ENCODE measurements at regions of chr14 and their contacts with region 1.

Region 1: DNA sequence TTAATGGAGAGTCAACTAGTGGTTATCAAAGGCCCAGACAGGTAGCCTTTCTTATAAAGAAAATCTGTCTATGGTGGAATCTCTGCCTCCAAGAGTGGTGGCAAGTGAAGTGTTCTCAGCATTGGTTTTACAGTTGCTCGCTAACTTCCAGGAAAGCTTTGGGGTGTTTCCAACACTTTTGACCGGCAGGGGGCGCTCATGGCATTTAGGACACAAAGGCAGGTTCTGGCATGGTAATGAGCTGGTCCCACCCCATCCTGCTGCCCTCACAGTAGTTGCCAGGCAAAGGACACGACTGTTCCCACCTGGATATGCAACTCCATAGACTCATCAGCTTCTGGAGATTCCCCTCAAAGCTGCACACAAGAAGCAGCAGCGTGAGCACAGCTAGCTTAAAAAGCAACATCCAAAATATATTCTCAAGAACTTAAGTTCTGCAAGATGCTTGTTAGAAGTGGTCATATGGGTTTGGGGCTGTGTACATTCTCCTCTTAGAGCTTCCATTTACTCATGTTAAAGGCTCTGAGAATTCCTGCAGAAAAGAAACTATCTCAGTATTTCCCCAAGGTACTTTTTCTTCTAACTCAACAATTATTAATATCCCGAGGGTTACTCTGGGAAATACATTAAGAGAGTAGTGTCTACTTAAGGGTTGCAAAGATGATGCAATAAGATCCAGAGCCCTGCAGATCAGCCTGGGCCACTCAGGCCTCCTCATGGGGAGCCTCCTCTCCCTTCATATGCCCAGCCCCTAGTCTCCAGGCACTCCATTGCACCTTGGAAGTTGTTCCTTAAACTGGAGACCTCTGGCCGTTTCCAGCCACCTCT is 14.8 kb downstream of the PROX2 start:
- DNase-seq: peak; percentile 63 to 96 (median 88)
- ATAC-seq: peak; percentile 83 to 90 (median 88)
- H3K4me3 ChIP-seq: no peak overlapping the region
- H3K4me3 Mint-ChIP-seq: no peak overlapping the region
- H3K27ac ChIP-seq: no peak overlapping the region
- H3K27ac Mint-ChIP-seq: no peak overlapping the region
- H3K4me1 ChIP-seq: peaks cover 0 to 9% of the 10 kb centered on the region in 2 experiments
- H3K4me1 Mint-ChIP-seq: peaks cover 8 to 15% (median 11%) of the 10 kb centered on the region in 3 donors
- H3K27me3 ChIP-seq: no peaks in the 10 kb centered on the region
- H3K27me3 Mint-ChIP-seq: no peaks in the 10 kb centered on the region

Region 2: DNA sequence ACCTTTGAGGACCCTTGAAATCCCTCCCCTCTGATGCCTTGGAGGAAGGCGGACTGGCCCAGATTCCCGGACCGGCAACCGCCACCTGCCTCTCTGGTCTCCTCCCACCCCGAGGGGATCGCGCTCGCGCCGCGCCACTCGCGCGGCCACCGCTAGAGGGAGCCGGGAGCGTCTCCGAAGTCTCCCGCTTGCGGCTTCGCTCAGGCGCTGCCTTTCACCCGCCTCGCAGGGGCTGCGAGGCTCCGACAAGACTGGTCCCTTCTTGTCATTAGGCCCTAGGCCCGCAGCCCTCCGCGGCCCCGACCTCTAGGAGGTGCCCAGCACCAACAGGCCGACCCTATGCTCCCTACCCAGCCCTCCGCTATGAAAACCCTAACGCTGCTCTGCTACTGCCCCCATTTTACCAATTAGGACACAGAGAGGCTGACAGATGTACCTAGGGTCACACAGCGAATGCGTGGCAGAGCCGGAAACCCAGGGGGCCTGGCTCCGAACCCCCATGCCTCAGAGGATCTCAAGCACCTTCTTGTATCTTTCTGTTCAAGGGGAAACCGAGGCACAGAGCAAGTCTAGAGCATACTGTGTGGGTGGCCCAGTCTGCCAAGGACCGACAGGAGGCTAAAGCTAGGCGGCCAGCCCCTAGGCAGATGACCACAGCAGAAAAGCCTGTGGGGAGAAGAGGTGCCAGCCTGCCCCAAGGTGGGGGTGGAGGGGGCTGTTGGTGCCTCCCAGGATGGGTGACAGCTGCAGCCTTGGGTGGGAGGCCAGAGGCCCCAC is 643.3 kb before region 1 on chr14:
- CTCF ChIA-PET with region 1: no interaction called
- POLR2A ChIA-PET with region 1: no interaction called
- DNase-seq: peak; percentile 31 to 77 (median 63)
- ATAC-seq: peak; percentile 91 to 96 (median 92)
- H3K4me3 ChIP-seq: peak overlapping the region; percentile 16 to 50
- H3K4me3 Mint-ChIP-seq: peak overlapping the region; percentile 21 to 41 (median 28)
- H3K27ac ChIP-seq: no peak overlapping the region
- H3K27ac Mint-ChIP-seq: no peak overlapping the region
- H3K4me1 ChIP-seq: peaks cover 0 to 10% of the 10 kb centered on the region in 2 experiments
- H3K4me1 Mint-ChIP-seq: peaks cover 0 to 4% (median 4%) of the 10 kb centered on the region in 3 donors
- H3K27me3 ChIP-seq: peaks cover 0 to 50% of the 10 kb centered on the region in 2 experiments
- H3K27me3 Mint-ChIP-seq: peaks cover 13 to 26% of the 10 kb centered on the region in 2 donors

Region 3: DNA sequence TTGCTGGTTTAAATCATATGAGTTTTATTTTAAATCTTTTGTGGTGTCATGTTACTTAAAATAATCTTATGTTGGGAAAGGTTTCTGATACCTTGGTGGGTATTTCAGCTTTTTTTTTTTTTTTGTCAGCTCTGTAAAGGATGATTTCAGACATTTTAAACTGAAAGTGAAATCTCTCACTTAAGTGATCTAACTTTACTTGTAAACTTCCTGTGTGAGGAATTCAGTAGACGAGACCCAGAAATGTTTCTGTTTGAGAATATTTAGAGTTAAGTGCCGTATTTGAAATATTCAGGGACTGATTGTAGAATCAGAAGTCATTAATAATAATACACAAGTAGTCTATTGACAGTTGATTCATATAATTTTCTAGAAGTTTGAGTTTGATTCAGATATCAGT is 23.0 kb before region 1 on chr14:
- CTCF ChIA-PET with region 1: interaction called in 1 of 2 experiments, 8 read pairs
- POLR2A ChIA-PET with region 1: interaction called in 1 of 2 experiments, 10 read pairs
- DNase-seq: peak in 1 of 35 experiments; percentile 64
- ATAC-seq: peak; percentile 55 to 74 (median 63)
- H3K4me3 ChIP-seq: no peak overlapping the region
- H3K4me3 Mint-ChIP-seq: peak overlapping the region; percentile 67 to 74 (median 70)
- H3K27ac ChIP-seq: peak overlapping the region; percentile 96
- H3K27ac Mint-ChIP-seq: peak overlapping the region; percentile 98 to 99
- H3K4me1 ChIP-seq: peaks cover 39 to 53% of the 10 kb centered on the region in 2 experiments
- H3K4me1 Mint-ChIP-seq: peaks cover 78 to 85% (median 85%) of the 10 kb centered on the region in 3 donors
- H3K27me3 ChIP-seq: no peaks in the 10 kb centered on the region
- H3K27me3 Mint-ChIP-seq: no peaks in the 10 kb centered on the region

Region 4: GRCh38 chr14:74881431-74882361 is 20.6 kb after region 1 on chr14 and contains the start of gene DLST:
- CTCF ChIA-PET with region 1: interaction called, 13 to 41 read pairs
- POLR2A ChIA-PET with region 1: interaction called in 1 of 2 experiments, 3 read pairs
- DNase-seq: peak; percentile 57 to 90 (median 74)
- ATAC-seq: peak; percentile 83 to 92 (median 90)
- H3K4me3 ChIP-seq: peak within 1 kb of the TSS; percentile 92 to 94
- H3K4me3 Mint-ChIP-seq: peak within 1 kb of the TSS; percentile 93 to 100 (median 97)
- H3K27ac ChIP-seq: peak within 1 kb of the TSS; percentile 89
- H3K27ac Mint-ChIP-seq: peak within 1 kb of the TSS; percentile 98
- H3K4me1 ChIP-seq: peaks cover 15 to 50% of the 10 kb centered on the region in 2 experiments
- H3K4me1 Mint-ChIP-seq: peaks cover 65 to 69% (median 67%) of the 10 kb centered on the region in 3 donors
- H3K27me3 ChIP-seq: no peaks in the 10 kb centered on the region
- H3K27me3 Mint-ChIP-seq: no peaks in the 10 kb centered on the region
- total RNA-seq, gene DLST: 88.3 to 128 (median 102) TPM

Region 5: DNA sequence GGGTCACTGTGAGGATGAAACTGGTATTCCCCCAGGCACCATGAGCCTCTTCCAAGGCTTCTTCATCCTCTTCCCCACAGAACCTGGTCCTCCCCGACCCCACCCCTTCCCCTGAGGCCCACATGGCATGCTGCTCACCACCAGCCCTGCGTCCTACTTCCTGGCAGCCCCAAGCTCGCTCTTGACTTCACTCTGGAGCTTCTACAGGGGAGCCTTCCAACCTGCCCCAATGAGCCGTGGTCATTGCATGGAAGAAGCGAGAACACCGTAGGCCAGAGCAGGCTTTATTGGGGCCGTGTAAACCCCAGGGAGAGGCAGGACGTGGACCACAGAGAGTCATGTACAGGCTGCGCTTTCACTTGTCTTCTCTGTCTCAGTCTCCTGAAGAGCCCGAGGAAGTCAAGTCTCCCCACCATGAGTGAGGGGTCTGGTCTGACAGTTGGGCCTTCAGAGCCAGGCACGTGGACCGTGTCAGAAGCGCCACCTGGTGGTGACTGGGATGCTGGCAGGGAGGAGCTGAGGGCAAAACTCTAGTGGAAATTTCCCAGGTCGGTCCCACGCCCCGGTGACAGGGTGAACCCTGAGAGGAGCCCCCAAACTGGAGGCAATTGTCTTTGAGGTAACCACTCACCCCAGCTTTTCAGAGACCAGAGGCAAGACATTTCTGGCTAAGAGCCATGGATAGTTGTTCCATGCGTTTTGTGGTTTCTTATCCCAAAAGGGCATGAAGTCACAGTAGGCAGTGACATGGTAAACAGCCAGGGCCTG is 44.4 kb after region 1 on chr14:
- CTCF ChIA-PET with region 1: interaction called, 79 to 166 read pairs
- POLR2A ChIA-PET with region 1: interaction called, 3 to 6 read pairs
- DNase-seq: peak; percentile 31 to 87 (median 74)
- ATAC-seq: peak; percentile 69 to 74 (median 72)
- H3K4me3 ChIP-seq: no peak overlapping the region
- H3K4me3 Mint-ChIP-seq: no peak overlapping the region
- H3K27ac ChIP-seq: peak overlapping the region; percentile 8
- H3K27ac Mint-ChIP-seq: peak overlapping the region; percentile 55 to 70
- H3K4me1 ChIP-seq: peaks cover 0 to 17% of the 10 kb centered on the region in 2 experiments
- H3K4me1 Mint-ChIP-seq: peaks cover 0 to 11% (median 11%) of the 10 kb centered on the region in 3 donors
- H3K27me3 ChIP-seq: no peaks in the 10 kb centered on the region
- H3K27me3 Mint-ChIP-seq: no peaks in the 10 kb centered on the region

Region 6: DNA sequence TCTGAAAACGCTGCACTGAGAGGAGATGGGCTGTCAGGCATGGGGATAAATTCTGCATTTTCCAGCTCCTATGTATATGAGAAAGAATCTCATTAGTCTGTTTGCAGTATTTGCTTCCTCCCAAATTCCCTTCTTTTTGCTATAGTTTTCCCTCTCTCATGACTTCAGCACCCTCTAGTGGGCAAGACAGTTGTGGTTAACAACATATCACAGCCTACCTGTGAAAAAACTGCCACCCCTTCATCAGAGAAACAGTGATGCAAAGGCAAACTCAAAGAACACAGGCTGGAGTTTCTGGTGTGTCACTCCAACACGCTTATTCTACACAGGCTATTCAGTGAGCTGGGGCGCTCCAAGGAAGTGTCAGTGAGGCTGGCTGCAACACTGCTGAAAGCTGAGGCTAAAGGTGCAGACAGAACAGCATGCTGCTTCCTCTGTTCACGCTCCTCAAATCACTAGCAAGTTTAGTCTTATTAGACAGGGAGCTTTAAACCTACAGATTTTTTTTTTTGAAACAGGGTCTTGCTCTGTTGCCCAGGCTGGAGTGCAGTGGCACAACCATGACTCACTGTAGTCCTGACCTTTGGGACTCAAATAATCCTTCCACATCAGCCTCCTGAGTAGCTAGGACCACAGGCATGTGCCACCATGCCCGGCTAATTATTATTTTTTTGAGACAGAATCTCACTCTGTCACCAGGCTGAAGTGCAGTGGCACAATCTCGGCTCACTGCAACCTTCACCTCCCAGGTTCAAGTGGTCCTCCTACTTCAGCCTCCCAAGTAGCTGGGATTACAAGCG is 227.7 kb after region 1 on chr14:
- CTCF ChIA-PET with region 1: interaction called, 18 to 30 read pairs
- POLR2A ChIA-PET with region 1: no interaction called
- DNase-seq: peak in 27 of 35 experiments; percentile 1 to 71 (median 24)
- ATAC-seq: peak in 3 of 4 experiments; percentile 63 to 68 (median 68)
- H3K4me3 ChIP-seq: no peak overlapping the region
- H3K4me3 Mint-ChIP-seq: no peak overlapping the region
- H3K27ac ChIP-seq: no peak overlapping the region
- H3K27ac Mint-ChIP-seq: no peak overlapping the region
- H3K4me1 ChIP-seq: no peaks in the 10 kb centered on the region
- H3K4me1 Mint-ChIP-seq: no peaks in the 10 kb centered on the region
- H3K27me3 ChIP-seq: no peaks in the 10 kb centered on the region
- H3K27me3 Mint-ChIP-seq: no peaks in the 10 kb centered on the region

Measured in T-cell (primary cell).